ENCODE measurements at regions of chr3 and their contacts with region 1.

Region 1: DNA sequence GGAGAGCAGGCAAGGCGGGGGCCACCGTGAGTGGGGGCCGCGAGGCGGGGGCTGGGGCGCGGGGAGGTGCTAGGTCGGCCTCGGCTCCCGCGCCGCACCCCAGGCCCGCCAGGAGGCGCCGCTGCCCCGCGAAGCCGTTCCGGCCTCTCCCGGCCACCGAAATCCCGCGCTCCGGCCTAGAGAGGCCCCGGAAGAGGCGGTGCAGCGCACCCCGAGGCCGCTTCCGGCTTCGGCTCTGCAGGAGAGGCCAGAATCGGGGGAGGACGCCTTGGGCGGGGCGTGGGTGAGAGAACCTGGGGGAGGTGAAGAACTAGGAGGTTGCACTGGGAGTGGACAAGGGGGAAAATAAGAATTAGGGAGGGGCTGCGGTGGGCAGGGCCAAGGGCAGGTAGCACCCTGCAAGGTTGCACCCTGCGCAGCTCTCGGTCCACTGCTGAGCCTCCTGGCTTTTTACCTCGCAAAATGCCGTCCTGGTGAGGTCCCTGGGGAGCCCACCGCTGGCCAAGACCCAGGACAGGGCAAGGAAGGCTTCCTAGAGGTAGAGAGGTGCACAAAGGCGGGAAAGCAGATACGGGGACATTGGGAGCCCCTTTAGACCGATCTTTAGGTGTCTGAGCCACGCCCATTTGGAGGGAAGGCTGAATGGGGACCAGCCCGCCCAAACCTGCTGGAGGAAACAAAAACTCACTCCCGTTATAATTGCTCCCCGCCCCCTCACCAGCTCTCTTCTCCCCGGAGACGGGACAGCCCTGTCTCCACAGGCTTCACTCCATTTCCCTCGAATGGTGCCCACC is 8.4 kb upstream of the GNAI2 start:
- DNase-seq: peak; percentile 95
- ATAC-seq: peak; percentile 83
- H3K4me3 Mint-ChIP-seq: peak overlapping the region; percentile 79
- H3K27ac Mint-ChIP-seq: peak overlapping the region; percentile 88
- H3K4me1 Mint-ChIP-seq: peaks cover 22% of the 10 kb centered on the region
- H3K27me3 Mint-ChIP-seq: no peaks in the 10 kb centered on the region

Region 2: DNA sequence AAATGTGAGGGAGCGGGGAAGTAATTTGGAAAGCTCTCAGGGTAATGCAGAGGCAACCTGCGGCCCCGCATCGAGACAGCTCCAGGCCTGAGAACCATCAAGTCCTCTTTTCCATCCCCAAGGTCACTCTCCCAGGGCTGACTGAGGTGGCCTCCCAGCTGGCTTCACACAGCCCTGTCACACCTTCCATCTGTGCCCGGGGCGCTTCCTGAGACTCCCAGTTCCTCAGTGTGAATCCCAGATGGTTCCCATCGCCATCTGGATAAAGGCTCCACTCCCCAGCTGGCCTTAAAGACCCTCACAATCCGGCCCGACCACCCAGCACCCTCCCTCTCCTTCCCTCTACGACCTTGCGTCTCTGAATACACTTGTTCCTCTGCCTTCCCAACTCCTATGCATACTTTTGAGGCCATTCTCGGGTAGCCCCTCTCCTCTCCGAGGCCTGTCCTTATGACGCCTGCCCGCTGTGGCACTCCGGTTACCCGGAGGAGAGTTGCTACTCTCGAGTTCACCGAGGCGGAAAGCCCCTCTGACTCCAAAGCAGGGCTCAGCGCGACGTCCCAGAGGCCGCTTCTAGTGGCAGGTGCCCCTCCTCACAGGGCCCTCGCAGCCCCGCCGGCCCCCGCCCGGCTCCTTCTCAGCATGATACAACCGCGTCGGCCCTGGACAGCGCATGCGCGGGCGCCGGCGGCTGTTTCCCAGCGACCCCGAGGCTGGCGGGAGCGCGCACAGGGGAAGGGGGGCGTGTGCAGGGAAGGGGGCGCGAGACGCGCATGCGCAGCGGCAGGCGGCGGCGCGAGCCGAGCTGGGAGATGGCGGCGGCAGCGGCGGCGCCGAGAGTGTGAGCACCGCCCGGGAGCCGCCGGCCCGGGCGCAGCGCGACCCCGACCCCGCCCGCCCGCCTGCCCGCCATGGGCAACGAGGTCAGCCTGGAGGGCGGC is 673.6 kb before region 1 on chr3 and contains the start of gene BSN:
- CTCF ChIA-PET with region 1: no interaction called
- POLR2A ChIA-PET with region 1: no interaction called
- intact Hi-C with region 1: loop called in 1 of 2 experiments (anchors 1 kb)
- DNase-seq: peak; percentile 95
- ATAC-seq: peak; percentile 92
- H3K4me3 Mint-ChIP-seq: peak within 1 kb of the TSS; percentile 72
- H3K27ac Mint-ChIP-seq: peak within 1 kb of the TSS; percentile 24
- H3K4me1 Mint-ChIP-seq: peaks cover 11% of the 10 kb centered on the region
- H3K27me3 Mint-ChIP-seq: peaks cover 34% of the 10 kb centered on the region
- total RNA-seq, gene BSN: 0.09 to 0.11 TPM

Region 3: GRCh38 chr3:50068134-50068533 is 159.5 kb before region 1 on chr3:
- CTCF ChIA-PET with region 1: no interaction called
- POLR2A ChIA-PET with region 1: no interaction called
- intact Hi-C with region 1: no loop called
- DNase-seq: no peak
- ATAC-seq: no peak
- H3K4me3 Mint-ChIP-seq: no peak overlapping the region
- H3K27ac Mint-ChIP-seq: no peak overlapping the region
- H3K4me1 Mint-ChIP-seq: no peaks in the 10 kb centered on the region
- H3K27me3 Mint-ChIP-seq: no peaks in the 10 kb centered on the region

Region 4: DNA sequence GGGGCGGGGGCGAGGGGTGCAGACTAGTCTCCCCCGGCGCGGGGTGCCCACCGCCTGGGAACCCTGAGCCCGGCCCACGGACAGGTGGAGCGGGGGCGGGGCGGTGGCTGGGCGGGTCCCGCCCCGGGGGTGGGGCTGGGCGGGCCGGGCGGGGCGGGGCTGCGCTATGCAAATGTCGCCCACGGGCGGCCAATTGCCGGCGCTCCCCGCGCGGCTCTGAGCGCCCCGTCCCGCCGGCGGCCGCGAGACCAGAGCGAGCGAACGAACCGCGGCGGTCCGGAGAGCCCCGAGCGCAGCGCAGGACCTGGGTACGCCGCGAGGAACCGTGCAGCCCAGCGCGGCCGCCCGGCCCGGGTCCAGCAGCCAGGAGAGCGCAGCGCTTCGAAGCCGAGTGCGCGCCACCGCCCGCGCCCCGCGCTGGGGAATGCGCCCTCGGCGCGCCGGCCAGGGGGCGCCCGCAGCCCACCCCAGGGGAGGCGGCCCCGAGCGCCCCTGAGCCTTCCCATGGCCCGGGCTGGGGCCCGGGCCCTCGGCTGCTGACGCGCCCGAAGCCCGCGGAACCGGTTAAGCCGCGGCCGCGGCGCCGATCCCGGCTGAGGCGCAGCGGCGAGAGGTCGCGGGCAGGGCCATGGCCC is 72.6 kb before region 1 on chr3 and contains the start of gene SEMA3F:
- CTCF ChIA-PET with region 1: interaction called, 3 read pairs
- POLR2A ChIA-PET with region 1: no interaction called
- intact Hi-C with region 1: loop called in 1 of 2 experiments (anchors 1 kb)
- DNase-seq: peak; percentile 79
- ATAC-seq: peak; percentile 89
- H3K4me3 Mint-ChIP-seq: peak within 1 kb of the TSS; percentile 60
- H3K27ac Mint-ChIP-seq: no peak within 1 kb of the TSS
- H3K4me1 Mint-ChIP-seq: peaks cover 8% of the 10 kb centered on the region
- H3K27me3 Mint-ChIP-seq: peaks cover 29% of the 10 kb centered on the region
- total RNA-seq, gene SEMA3F: 0.25 to 0.46 TPM

Region 5: DNA sequence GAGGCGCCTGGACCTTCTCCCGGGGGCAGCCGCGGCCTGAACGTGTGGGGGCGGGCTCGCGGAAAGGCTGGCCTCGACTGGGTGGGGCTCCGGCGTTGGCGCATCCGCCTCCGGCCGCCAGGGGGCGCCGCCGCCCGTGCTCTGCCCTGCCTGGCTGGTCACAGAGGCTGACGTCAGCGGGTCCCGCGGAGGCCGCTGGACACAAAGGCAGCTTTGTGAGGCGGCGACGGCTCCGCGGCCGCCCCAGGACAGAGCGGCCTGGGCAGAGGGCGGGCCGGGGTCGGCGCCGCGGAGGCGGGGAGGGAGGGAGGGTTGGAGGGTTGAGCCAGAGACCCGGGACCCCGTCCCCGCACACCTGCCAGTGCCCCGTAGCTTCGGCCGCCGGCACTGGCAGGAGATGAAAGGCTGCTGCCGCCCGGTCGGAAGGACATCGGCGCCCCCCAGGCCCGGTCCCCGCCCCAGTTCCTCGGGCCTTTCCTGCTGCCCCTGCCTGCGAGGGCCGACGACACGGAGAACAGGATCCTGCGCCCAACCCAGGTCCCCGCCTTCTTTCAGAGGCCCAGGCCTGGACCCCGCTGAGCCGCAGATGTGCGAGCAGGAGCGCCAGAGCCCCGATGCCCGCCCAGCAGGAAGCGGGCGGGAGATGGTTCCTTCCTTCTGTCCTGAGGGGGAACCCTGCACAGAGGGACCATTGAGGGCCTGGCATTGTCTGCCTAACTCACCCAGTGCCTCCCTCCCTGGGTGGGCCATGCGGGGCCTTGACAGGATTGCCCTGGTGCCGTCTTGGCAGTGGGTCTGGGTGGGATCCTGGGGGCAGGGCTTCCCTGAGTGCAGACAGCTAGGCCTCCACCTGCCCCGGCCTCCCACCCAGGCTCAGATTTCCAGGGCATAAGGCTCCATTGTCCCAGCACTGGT is 32.7 kb after region 1 on chr3:
- CTCF ChIA-PET with region 1: interaction called, 8 read pairs
- POLR2A ChIA-PET with region 1: interaction called, 5 read pairs
- intact Hi-C with region 1: loop called in 1 of 2 experiments (anchors 1 kb)
- DNase-seq: peak; percentile 94
- ATAC-seq: peak; percentile 91
- H3K4me3 Mint-ChIP-seq: peak overlapping the region; percentile 61
- H3K27ac Mint-ChIP-seq: peak overlapping the region; percentile 65
- H3K4me1 Mint-ChIP-seq: peaks cover 4% of the 10 kb centered on the region
- H3K27me3 Mint-ChIP-seq: no peaks in the 10 kb centered on the region

Measured in activated CD4-positive, alpha-beta T cell treated with anti-CD3 and anti-CD28 coated beads for 36 hours (primary cell).